CD4-positive, alpha-beta T cell (primary cell): ENCODE measurements at regions of chr14 and their contacts with region 1.

Region 1: DNA sequence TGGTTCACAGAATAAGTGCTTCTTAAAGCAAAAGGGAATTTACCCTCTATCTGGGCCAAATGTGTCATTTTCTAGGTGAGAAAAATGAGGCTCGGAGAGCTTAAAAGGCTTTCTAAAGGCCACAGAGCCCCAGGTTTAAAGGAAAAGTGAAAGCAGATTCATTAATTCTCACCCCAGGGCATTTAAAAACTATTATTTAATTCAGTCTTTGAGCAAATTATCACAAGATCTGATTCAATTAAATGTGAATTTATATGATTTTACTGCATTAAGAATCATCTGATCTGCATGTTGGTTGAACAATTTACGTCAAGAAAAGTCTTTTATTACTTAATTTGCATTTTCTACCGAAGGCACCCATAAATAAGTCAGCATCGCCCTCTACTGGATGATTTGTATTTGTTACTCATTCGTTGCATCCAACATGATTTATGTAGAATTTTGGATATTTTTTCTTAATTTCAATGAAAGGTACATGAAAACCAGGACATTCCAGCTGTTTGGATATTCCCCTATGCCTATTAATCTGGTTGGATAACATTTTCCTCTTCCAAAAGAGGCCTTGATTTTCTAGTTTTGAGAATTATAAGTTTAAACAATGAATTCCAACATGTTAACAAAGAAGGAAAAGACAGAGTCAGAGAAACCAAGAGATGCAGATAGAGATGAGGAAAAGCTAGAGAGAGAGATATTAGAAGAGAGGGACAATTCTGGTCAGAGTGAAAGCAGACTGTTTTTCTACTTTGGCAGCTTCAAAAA is 19.1 kb upstream of the DHRS7 start:
- DNase-seq: peak in 6 of 14 experiments; percentile 9 to 87 (median 62)
- ATAC-seq: peak; percentile 71
- H3K4me3 ChIP-seq: peak overlapping the region; percentile 52
- H3K4me3 Mint-ChIP-seq: peak overlapping the region; percentile 75
- H3K27ac ChIP-seq: peak overlapping the region in 1 of 2 donors; percentile 74
- H3K27ac Mint-ChIP-seq: peak overlapping the region; percentile 74
- H3K4me1 ChIP-seq: peaks cover 4% of the 10 kb centered on the region
- H3K4me1 Mint-ChIP-seq: peaks cover 11% of the 10 kb centered on the region
- H3K27me3 ChIP-seq: no peaks in the 10 kb centered on the region
- H3K27me3 Mint-ChIP-seq: no peaks in the 10 kb centered on the region
- CTCF ChIP-seq: peak; percentile 89

Region 2: DNA sequence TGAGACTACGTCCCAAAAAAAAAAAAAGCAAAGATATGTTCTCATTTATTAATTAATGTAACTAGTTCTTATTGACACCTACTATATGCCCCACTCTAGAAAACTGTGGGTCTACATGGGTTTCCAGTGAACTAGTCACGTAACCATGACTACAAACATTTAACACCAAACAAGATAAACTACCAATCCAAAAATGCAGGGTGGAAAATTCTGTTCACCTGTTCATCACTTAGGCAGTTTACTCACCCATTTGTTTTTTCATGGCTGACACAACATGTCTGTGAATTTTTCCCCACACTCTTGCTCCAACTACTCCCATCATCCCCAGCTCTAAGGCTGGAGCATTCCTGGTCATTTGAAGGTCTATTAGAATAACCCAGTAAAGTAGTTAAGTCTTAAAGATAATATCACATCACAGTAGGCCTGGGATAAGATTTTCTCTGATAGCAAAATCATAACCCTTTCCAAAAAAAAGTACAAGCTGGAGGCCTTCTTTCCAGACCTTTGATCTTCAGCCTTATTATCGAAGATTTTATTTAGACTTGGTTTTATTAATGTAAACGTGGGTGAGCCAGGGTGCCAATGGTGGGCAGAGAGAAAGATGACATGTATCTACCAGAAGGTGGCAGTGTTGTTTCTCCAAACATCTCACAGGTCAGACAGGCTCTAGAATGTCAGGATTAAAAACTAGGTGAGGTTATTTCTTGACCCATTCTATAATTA is 1057.5 kb before region 1 on chr14:
- CTCF ChIA-PET with region 1: no interaction called
- POLR2A ChIA-PET with region 1: no interaction called
- intact Hi-C with region 1: loop called (anchors 1 to 2 kb)
- DNase-seq: peak in 8 of 14 experiments; percentile 1 to 78 (median 18)
- ATAC-seq: peak; percentile 82
- H3K4me3 ChIP-seq: no peak overlapping the region
- H3K4me3 Mint-ChIP-seq: no peak overlapping the region
- H3K27ac ChIP-seq: no peak overlapping the region
- H3K27ac Mint-ChIP-seq: no peak overlapping the region
- H3K4me1 ChIP-seq: no peaks in the 10 kb centered on the region
- H3K4me1 Mint-ChIP-seq: no peaks in the 10 kb centered on the region
- H3K27me3 ChIP-seq: no peaks in the 10 kb centered on the region
- H3K27me3 Mint-ChIP-seq: peaks cover 32% of the 10 kb centered on the region
- CTCF ChIP-seq: peak; percentile 88

Region 3: GRCh38 chr14:59483900-59484638 is 700.3 kb before region 1 on chr14 and contains the starts of genes JKAMP and L3HYPDH:
- CTCF ChIA-PET with region 1: no interaction called
- POLR2A ChIA-PET with region 1: no interaction called
- intact Hi-C with region 1: loop called in 1 of 2 experiments (anchors 10 kb)
- DNase-seq: peak; percentile 95 to 99 (median 97)
- ATAC-seq: peak; percentile 95
- H3K4me3 ChIP-seq: peak within 1 kb of the TSS; percentile 99
- H3K4me3 Mint-ChIP-seq: peak within 1 kb of the TSS; percentile 99
- H3K27ac ChIP-seq: peak within 1 kb of the TSS; percentile 62 to 63
- H3K27ac Mint-ChIP-seq: peak within 1 kb of the TSS; percentile 96
- H3K4me1 ChIP-seq: peaks cover 39% of the 10 kb centered on the region
- H3K4me1 Mint-ChIP-seq: peaks cover 73% of the 10 kb centered on the region
- H3K27me3 ChIP-seq: no peaks in the 10 kb centered on the region
- H3K27me3 Mint-ChIP-seq: no peaks in the 10 kb centered on the region
- CTCF ChIP-seq: peak; percentile 28
- total RNA-seq, gene JKAMP: 9.4 to 9.8 TPM
- total RNA-seq, gene L3HYPDH: 10.6 to 11.1 TPM

Region 4: GRCh38 chr14:59964251-59965007 is 219.9 kb before region 1 on chr14:
- CTCF ChIA-PET with region 1: interaction called, 54 read pairs
- POLR2A ChIA-PET with region 1: interaction called, 21 read pairs
- intact Hi-C with region 1: loop called (anchors 1 kb)
- DNase-seq: peak in 2 of 14 experiments; percentile 13 to 18
- ATAC-seq: peak; percentile 10
- H3K4me3 ChIP-seq: peak overlapping the region; percentile 64
- H3K4me3 Mint-ChIP-seq: peak overlapping the region; percentile 94
- H3K27ac ChIP-seq: no peak overlapping the region
- H3K27ac Mint-ChIP-seq: peak overlapping the region; percentile 96
- H3K4me1 ChIP-seq: peaks cover 9% of the 10 kb centered on the region
- H3K4me1 Mint-ChIP-seq: peaks cover 22% of the 10 kb centered on the region
- H3K27me3 ChIP-seq: no peaks in the 10 kb centered on the region
- H3K27me3 Mint-ChIP-seq: no peaks in the 10 kb centered on the region
- CTCF ChIP-seq: no peak

Region 5: GRCh38 chr14:60091550-60092530 is 92.5 kb before region 1 on chr14 and contains the start of gene PCNX4:
- CTCF ChIA-PET with region 1: no interaction called
- POLR2A ChIA-PET with region 1: interaction called, 10 read pairs
- intact Hi-C with region 1: no loop called
- DNase-seq: peak; percentile 88 to 99 (median 92)
- ATAC-seq: peak; percentile 92
- H3K4me3 ChIP-seq: peak within 1 kb of the TSS; percentile 89
- H3K4me3 Mint-ChIP-seq: peak within 1 kb of the TSS; percentile 96
- H3K27ac ChIP-seq: peak within 1 kb of the TSS; percentile 94 to 98
- H3K27ac Mint-ChIP-seq: peak within 1 kb of the TSS; percentile 99
- H3K4me1 ChIP-seq: peaks cover 21% of the 10 kb centered on the region
- H3K4me1 Mint-ChIP-seq: peaks cover 51% of the 10 kb centered on the region
- H3K27me3 ChIP-seq: no peaks in the 10 kb centered on the region
- H3K27me3 Mint-ChIP-seq: no peaks in the 10 kb centered on the region
- CTCF ChIP-seq: no peak
- total RNA-seq, gene PCNX4: 17.3 to 21.0 TPM

Region 6: DNA sequence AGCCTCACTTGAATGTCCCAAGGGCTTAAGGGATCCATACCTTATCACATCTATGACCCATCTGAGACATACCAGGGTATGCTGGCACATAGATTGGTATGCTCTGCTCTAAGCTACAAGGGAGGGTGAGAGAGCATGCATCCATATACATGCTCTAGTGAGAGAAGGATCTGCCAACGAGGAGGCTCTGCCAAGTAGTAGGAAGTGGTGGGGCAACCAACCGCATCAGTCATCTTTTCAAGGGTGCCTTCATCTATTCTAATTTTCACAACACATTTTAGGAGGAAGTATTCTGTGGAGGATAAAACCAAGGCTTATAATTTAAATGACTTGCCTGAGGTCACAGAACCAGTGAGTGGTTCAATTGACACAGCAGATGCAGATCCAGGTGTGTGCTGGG is 58.1 kb after region 1 on chr14:
- CTCF ChIA-PET with region 1: no interaction called
- POLR2A ChIA-PET with region 1: interaction called, 35 read pairs
- intact Hi-C with region 1: loop called in 1 of 2 experiments (anchors 5 kb)
- DNase-seq: peak in 1 of 14 experiments; percentile 14
- ATAC-seq: no peak
- H3K4me3 ChIP-seq: no peak overlapping the region
- H3K4me3 Mint-ChIP-seq: no peak overlapping the region
- H3K27ac ChIP-seq: no peak overlapping the region
- H3K27ac Mint-ChIP-seq: no peak overlapping the region
- H3K4me1 ChIP-seq: peaks cover 5% of the 10 kb centered on the region
- H3K4me1 Mint-ChIP-seq: peaks cover 4% of the 10 kb centered on the region
- H3K27me3 ChIP-seq: peaks cover 0 to 3% of the 10 kb centered on the region in 2 experiments
- H3K27me3 Mint-ChIP-seq: peaks cover 5% of the 10 kb centered on the region
- CTCF ChIP-seq: no peak